ENCODE measurements at regions of chr1 and their contacts with region 1.

Region 1: DNA sequence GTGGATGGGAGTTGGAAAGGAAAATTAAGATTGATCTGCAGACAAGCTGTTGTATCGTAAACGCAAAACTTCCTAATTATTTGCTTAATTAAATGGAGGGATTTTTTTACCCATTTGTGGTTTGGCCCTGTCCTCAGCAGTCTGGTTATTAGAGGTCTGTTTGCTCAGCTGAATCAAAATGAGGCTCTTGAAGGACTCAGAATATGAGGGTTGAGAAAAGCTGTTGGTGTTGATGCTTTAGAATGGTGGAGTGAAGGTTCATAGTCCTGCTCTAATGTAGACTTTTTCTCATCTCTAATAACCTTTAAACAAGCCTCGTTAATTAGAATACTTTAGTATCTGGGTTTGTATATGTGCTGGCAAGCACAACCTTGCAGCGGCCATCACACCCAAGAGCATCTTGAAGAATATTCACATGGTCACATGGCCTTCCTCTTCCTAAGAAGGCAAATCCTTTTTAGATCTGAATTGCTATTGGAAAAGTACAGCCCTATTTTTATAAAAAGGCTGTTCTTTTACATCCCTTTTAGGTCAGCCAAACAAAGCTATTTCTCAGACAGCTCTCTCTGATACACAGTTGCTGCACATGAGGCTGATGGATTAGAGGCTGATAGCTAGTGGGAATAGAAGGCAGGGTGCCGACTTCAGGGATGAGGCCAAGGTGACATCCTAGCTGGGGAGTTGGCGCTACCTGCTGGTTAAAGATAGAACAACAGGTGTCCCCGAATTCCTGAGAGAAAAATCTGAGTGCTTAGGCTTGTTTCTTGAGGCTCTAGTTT is 53.8 kb downstream of the MACF1 start:
- DNase-seq: peak in 2 of 3 donors; percentile 51 to 84
- ATAC-seq: peak; percentile 92
- H3K4me3 ChIP-seq: no peak overlapping the region
- H3K4me1 ChIP-seq: no peaks in the 10 kb centered on the region
- CTCF ChIP-seq: peak; percentile 70

Region 2: GRCh38 chr1:39102537-39103327 is 155.6 kb before region 1 on chr1:
- intact Hi-C with region 1: loop called (anchors 5 to 10 kb)
- DNase-seq: peak in 1 of 3 donors; percentile 48
- ATAC-seq: peak; percentile 31
- H3K4me3 ChIP-seq: no peak overlapping the region
- H3K4me1 ChIP-seq: peaks cover 18% of the 10 kb centered on the region
- CTCF ChIP-seq: peak; percentile 39

Region 3: GRCh38 chr1:39196244-39197215 is 61.8 kb before region 1 on chr1:
- intact Hi-C with region 1: loop called in 1 of 2 experiments (anchors 10 kb)
- DNase-seq: no peak
- ATAC-seq: peak; percentile 63
- H3K4me3 ChIP-seq: no peak overlapping the region
- H3K4me1 ChIP-seq: peaks cover 11% of the 10 kb centered on the region
- CTCF ChIP-seq: no peak

Region 4: GRCh38 chr1:39204441-39205081 is 53.8 kb before region 1 on chr1 and contains the start of gene MACF1:
- intact Hi-C with region 1: loop called (anchors 5 to 10 kb)
- DNase-seq: peak in 2 of 3 donors; percentile 44 to 58
- ATAC-seq: peak; percentile 71
- H3K4me3 ChIP-seq: no peak within 1 kb of the TSS
- H3K4me1 ChIP-seq: no peaks in the 10 kb centered on the region
- CTCF ChIP-seq: no peak
- total RNA-seq, gene MACF1: 146 to 362 (median 156) TPM